Posterior cingulate gyrus (tissue), 11 donors: ENCODE measurements at regions of chr1 and their contacts with region 1.

Region 1: DNA sequence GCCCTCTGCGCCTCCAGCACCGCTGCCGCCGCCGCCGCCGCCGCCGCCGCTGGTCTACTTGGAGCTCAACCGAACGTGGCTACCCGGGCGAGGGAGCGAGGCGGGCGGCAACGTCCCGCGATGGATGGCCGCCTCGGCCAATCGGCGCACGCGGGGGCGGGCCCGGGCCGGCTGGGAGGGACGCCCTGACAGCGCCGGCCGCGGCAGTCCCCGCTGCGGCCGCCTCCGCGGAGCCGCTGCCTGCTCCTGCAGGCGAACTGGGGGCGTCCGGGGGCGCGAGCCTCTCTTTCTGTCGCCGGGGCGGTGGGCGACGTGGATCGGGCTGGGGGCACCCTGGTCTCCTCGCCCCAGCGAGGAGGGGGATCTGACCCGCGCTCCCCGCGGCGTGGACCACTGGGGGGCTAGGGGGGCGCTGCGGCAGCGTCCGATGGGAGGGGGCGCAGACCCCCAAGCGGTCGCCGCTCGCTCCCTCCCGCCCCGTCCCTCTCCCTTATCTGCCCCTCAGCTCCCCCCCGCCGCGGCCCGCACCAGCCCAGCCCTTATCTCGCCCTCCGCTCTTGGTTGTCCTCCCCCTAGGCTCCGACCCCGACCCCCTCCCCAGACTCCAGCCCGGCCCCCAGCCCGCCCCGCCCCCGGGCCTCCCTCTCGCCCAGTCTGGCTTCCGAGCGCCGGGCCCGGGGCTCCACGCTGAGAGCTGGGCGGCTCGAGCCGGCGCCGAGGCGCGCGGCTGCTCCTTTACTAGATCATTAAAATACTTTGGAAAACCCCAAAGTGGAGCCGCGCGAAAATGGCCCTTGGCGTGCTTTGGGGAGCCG is at the start of gene SSBP3:
- DNase-seq: peak; percentile 85 to 99 (median 94)

Region 2: DNA sequence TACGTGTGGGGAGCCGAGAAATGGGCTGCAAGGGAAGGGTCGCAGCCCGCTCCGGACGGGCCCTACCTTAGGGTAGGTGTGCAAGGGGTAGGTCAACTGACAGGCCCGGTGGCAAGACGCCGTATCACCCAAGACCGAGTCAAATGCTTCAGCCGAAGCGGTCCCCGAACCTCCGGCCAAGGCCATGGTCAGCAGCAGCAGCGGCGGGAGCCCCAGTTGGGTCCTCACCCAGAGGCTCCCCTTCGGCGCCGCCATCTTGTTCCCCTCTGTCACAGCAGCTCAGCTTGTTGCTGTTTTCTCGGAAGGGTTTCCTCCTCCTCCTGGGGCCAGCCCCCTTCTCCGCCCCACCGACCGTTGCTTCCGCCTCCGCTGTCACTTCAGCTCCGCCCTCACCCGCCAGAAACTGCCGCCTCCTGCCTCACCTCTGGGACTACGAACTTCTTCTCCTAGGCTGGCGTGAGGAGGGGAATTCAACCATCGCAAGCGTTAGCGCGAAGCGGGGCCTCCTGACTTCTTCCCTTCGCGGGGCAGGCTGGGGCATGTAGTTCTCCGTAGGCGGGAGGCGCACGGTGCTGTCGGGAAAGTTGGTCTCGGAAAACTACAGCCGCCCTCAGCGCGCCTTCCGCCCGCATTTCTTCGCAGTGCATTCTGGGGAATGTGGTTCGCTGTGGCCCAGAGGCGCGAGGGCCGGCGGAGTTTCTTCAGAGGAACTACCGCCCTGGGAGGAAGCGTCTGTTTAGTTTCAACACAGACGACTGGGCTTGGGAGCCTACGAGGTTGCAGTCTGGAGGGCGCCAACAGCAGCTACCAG is 353.4 kb before region 1 on chr1 and contains the starts of genes TCEANC2 and TMEM59:
- intact Hi-C with region 1: loop called (anchors 10 kb)
- DNase-seq: peak; percentile 97 to 100 (median 98)

Region 3: DNA sequence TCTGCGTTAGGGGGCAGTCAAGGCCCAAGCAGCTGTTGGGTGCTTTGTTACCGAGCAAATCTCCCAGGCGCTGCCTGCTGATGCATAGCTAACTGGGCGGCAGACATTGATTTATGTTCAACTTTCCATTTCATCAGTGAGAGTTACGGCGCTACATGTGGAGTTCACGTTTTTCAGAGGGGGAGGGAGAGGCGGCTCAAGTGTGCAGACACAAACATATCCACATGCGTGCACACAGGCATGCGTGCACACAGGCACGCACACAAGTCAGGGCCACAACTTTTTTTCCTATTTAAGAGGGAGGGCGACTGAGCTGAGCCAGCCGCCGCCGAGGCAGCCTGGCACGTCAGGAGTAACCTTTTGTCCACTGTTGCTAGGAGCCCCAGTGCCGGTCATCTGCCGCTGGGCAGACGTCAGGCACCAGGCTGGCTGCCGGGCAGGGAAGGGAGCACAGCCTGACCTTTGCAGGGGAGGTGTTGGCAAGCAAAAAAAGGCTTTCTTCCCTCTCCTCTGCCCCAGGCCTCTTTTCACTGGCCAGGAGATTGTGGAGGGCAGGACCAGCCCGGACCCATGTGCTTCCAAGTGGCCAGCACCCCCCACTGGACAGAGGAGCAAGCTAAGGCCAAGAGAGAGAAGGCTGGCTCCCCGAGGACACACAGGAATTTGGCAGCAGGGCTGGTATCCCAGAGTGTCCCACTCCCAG is 133.3 kb before region 1 on chr1:
- intact Hi-C with region 1: loop called (anchors 5 kb)
- DNase-seq: peak; percentile 62 to 97 (median 76)